ENCODE measurements at regions of chr15 and their contacts with region 1.

Region 1: GRCh38 chr15:86611417-86612040 is 531.9 kb downstream of the AGBL1 start:
- DNase-seq: peak; percentile 37
- H3K4me3 Mint-ChIP-seq: peak overlapping the region; percentile 33
- H3K27ac Mint-ChIP-seq: peak overlapping the region; percentile 84
- H3K4me1 Mint-ChIP-seq: peaks cover 63% of the 10 kb centered on the region
- H3K27me3 Mint-ChIP-seq: no peaks in the 10 kb centered on the region

Region 2: DNA sequence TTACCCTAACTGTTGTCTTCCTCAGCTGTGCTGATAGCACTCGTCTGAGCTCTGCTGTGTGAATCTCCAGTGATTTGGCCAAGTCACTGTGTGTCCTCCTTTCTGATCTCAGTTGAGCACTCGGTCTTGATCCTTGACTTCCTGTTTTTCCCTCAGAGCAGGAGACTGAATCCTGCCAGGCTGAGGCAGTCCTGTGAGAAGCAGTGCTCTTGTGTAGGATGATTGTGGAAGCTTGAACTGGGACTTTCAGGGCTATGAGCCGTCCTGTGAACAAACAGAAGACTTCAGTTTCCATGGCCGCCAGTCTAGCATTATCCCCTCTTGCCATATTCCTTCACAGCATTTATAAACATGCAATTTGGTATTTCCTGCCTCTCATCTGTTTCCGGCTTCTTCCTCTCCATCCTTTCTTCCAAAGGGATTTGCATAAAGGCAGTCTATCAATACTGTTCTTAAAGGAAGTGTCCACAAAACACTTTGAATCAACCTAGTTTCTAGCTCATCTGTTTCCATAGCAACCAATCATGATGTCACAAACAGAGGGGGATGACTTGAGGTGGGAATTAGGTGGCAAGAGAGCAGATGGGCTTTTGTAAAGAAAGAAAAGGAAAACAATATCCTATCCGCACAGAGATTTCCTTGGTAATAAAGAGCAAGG is 294.7 kb before region 1 on chr15:
- intact Hi-C with region 1: no loop called
- DNase-seq: no peak
- H3K4me3 Mint-ChIP-seq: no peak overlapping the region
- H3K27ac Mint-ChIP-seq: no peak overlapping the region
- H3K4me1 Mint-ChIP-seq: peaks cover 11% of the 10 kb centered on the region
- H3K27me3 Mint-ChIP-seq: peaks cover 9% of the 10 kb centered on the region

Region 3: DNA sequence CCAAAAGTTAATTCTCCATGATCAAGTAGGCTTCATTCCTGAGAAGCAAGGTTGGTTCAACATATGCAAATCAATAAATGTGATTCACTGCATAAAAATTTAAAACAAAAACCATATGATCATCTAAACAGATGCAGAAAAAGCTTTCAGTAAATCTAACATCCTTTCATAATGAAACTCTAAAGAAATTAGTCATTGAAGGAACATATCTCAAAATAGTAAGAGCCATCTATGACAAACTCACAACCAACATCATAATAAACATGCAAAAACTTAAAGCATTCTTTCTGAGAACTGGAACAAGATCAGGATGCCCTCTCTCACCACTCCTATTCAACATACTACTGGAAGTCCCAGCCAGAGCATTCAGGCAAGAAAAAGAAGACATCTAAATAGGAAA is 277.7 kb before region 1 on chr15:
- intact Hi-C with region 1: loop called (anchors 2 kb)
- DNase-seq: no peak
- H3K4me3 Mint-ChIP-seq: no peak overlapping the region
- H3K27ac Mint-ChIP-seq: no peak overlapping the region
- H3K4me1 Mint-ChIP-seq: peaks cover 6% of the 10 kb centered on the region
- H3K27me3 Mint-ChIP-seq: no peaks in the 10 kb centered on the region

Region 4: GRCh38 chr15:86725628-86726027 is 114.1 kb after region 1 on chr15:
- intact Hi-C with region 1: no loop called
- DNase-seq: no peak
- H3K4me3 Mint-ChIP-seq: no peak overlapping the region
- H3K27ac Mint-ChIP-seq: no peak overlapping the region
- H3K4me1 Mint-ChIP-seq: peaks cover 4% of the 10 kb centered on the region
- H3K27me3 Mint-ChIP-seq: no peaks in the 10 kb centered on the region

Region 5: GRCh38 chr15:87597346-87598052 is 986.0 kb after region 1 on chr15:
- intact Hi-C with region 1: loop called (anchors 2 kb)
- DNase-seq: peak; percentile 48
- H3K4me3 Mint-ChIP-seq: no peak overlapping the region
- H3K27ac Mint-ChIP-seq: peak overlapping the region; percentile 65
- H3K4me1 Mint-ChIP-seq: peaks cover 31% of the 10 kb centered on the region
- H3K27me3 Mint-ChIP-seq: peaks cover 7% of the 10 kb centered on the region

Measured in activated T-helper 2 cell treated with anti-CD3 and anti-CD28 coated beads, Interferon-gamma antibody, Interleukin-2, Interleukin-4, amounts not matched to agents 10 μg/mL and 5 μg/mL and 100 μg/mL, durations not matched to agents 14 hours and 24 hours and 36 hours (primary cell).